Gastrocnemius medialis (tissue), 4 donors: ENCODE measurements at regions of chr16 and their contacts with region 1.

Region 1: DNA sequence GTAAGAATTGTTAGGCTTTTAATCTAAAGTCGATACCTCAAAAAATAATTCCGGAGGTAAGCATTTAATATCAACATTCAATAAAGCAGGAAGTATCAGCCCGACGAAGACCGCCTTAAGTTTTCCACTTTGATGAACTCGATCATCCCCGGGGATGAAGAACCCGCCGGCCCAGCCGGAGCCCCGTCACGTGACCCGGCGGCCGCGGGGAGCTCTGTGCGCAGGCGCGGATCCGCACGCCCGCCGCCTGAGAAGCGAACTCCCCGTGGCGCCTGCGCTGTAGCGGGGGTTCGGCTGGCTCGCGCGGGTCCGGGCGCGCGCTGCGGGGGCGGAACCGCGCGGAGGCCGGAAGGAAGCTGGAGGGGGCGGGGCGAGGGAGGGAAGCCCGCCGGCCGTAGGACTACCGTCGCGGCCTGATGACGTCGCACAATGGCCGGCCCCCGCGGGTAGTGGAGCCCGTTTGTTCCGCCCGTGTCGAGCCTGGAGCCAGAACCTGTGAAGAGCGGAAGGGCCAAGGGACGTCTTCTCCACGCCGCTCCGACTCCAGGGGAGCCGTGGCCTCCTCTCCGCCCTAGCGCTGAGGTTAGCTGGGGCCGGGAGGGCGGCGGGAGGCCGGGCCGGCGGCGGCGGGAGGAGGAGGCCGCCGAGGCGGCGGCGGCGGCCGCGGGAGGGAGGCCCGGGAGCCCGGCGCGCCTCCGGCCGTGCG is at the start of gene ZC3H18:
- DNase-seq: peak; percentile 92 to 94
- ATAC-seq: peak; percentile 94 to 96
- H3K4me3 ChIP-seq: peak within 1 kb of the TSS; percentile 78 to 93 (median 90)
- H3K27ac ChIP-seq: peak within 1 kb of the TSS; percentile 84 to 90 (median 88)
- H3K4me1 ChIP-seq: peaks cover 22 to 29% of the 10 kb centered on the region in 2 donors
- H3K27me3 ChIP-seq: no peaks in the 10 kb centered on the region
- CTCF ChIP-seq: peak in 3 of 5 experiments; percentile 0 to 37 (median 36)
- POLR2A ChIP-seq: peak; percentile 58 to 65
- total RNA-seq, gene ZC3H18: 10.9 to 20.5 (median 18.4) TPM

Region 2: GRCh38 chr16:87765776-87766484 is 804.2 kb before region 1 on chr16 and contains the start of gene KLHDC4:
- in situ Hi-C with region 1: loop called in 1 of 4 experiments (anchors 25 kb)
- intact Hi-C with region 1: loop called (anchors 1 kb)
- DNase-seq: peak; percentile 83 to 86
- ATAC-seq: peak; percentile 95
- H3K4me3 ChIP-seq: peak within 1 kb of the TSS; percentile 86 to 98 (median 94)
- H3K27ac ChIP-seq: peak within 1 kb of the TSS; percentile 88 to 95 (median 90)
- H3K4me1 ChIP-seq: peaks cover 5 to 8% of the 10 kb centered on the region in 2 donors
- H3K27me3 ChIP-seq: no peaks in the 10 kb centered on the region
- CTCF ChIP-seq: no peak
- POLR2A ChIP-seq: peak; percentile 68 to 85
- total RNA-seq, gene KLHDC4: 8.2 to 12.7 (median 10.4) TPM

Region 3: DNA sequence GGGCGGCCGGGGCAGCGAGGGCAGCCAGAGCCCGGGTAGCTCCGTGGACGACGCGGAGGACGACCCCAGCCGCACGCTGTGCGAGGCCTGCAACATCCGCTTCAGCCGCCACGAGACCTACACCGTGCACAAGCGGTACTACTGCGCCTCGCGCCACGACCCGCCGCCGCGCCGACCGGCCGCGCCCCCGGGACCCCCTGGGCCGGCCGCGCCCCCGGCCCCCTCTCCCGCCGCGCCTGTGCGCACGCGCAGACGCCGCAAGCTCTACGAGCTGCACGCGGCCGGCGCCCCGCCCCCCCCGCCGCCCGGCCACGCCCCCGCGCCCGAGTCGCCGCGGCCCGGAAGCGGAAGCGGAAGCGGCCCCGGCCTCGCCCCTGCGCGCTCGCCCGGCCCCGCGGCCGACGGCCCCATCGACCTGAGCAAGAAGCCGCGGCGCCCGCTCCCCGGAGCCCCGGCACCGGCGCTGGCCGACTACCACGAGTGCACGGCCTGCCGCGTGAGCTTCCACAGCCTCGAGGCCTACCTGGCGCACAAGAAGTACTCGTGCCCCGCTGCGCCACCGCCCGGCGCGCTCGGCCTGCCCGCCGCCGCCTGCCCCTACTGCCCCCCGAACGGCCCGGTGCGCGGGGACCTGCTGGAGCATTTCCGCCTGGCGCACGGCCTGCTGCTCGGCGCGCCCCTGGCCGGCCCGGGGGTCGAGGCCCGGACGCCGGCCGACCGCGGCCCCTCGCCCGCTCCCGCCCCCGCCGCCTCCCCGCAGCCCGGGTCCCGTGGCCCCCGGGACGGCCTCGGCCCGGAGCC is 36.0 kb before region 1 on chr16:
- in situ Hi-C with region 1: no loop called
- intact Hi-C with region 1: loop called (anchors 2 kb)
- DNase-seq: peak; percentile 42 to 67
- ATAC-seq: peak; percentile 90
- H3K4me3 ChIP-seq: peak overlapping the region; percentile 45 to 79 (median 66)
- H3K27ac ChIP-seq: peak overlapping the region; percentile 62 to 88 (median 84)
- H3K4me1 ChIP-seq: peaks cover 7 to 25% of the 10 kb centered on the region in 2 donors
- H3K27me3 ChIP-seq: peaks cover 0 to 3% (median 2%) of the 10 kb centered on the region in 3 donors
- CTCF ChIP-seq: peak in 1 of 5 experiments; percentile 19
- POLR2A ChIP-seq: peak; percentile 68 to 80

Region 4: DNA sequence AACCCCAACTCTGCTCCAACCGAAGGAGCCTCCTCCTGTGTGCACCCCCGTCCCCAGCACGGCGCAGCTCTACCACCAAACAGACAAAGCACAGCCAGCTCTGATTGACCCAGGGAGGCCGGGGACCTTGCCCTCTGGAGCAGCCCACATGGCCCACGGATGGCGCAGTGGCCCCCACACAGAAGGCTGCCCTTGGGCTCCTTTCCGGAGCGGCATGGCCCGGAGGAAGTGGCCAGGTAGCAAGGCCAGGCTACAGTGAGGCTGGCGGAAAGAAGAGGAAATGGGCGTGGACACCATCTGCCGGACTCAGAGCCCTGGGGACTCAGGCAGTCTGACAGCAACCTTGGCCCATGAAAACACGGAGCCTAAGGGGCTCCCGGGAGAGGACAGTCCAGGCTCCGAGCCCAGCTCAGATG is 19.9 kb before region 1 on chr16:
- in situ Hi-C with region 1: no loop called
- intact Hi-C with region 1: no loop called
- DNase-seq: no peak
- ATAC-seq: no peak
- H3K4me3 ChIP-seq: no peak overlapping the region
- H3K27ac ChIP-seq: no peak overlapping the region
- H3K4me1 ChIP-seq: no peaks in the 10 kb centered on the region
- H3K27me3 ChIP-seq: peaks cover 2 to 19% (median 11%) of the 10 kb centered on the region in 3 donors
- CTCF ChIP-seq: no peak
- POLR2A ChIP-seq: no peak

Region 5: GRCh38 chr16:88706288-88706964 is 136.3 kb after region 1 on chr16 and contains the starts of genes CTU2 and RNF166:
- in situ Hi-C with region 1: loop called in 1 of 4 experiments (anchors 10 kb)
- intact Hi-C with region 1: loop called (anchors 2 kb)
- DNase-seq: peak; percentile 80 to 86
- ATAC-seq: peak; percentile 91 to 92
- H3K4me3 ChIP-seq: peak within 1 kb of the TSS; percentile 68 to 99 (median 81)
- H3K27ac ChIP-seq: peak within 1 kb of the TSS; percentile 80 to 95 (median 88)
- H3K4me1 ChIP-seq: peaks cover 23 to 33% of the 10 kb centered on the region in 2 donors
- H3K27me3 ChIP-seq: no peaks in the 10 kb centered on the region
- CTCF ChIP-seq: peak in 2 of 5 experiments; percentile 43 to 68
- POLR2A ChIP-seq: peak; percentile 96 to 99
- total RNA-seq, gene CTU2: 11.1 to 17.7 (median 14.1) TPM
- total RNA-seq, gene RNF166: 22.9 to 32.5 (median 26.1) TPM

Region 6: DNA sequence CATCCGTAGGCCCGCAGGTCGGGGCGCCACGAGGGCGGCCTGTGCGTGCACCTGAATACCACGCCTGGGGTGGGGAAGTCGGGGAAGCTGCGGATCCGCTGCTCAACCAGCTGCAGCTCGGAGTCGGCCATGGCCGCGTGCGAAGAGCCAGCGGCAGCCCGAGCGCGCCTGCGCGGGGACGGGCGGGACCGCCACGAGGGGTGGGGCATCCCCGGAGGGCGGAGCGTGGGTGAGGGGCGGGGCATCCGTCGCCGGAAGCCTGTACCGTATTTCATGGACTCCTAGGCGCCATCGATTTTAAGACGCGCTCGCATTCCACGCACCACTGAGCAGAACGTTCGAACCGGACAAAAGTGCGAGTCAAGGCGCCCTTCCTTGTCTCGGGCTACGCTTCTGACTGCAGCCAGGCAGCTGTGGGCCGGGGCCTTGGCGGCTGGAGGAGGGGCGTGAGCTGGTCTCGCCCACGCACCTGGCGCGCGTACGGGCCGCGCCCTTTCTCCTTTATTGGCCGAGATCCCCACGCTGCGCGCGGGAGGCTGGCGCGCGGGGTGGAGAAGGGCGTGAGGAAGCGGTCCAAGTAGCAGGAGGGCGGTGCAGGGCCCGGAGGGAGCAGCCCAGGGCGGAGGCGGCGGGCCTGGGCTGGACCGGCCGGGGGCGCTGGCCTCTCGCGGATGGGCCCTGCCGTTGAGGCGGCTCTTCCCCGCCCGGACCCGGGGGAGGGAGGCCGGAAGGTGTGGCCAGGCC is 241.8 kb after region 1 on chr16 and contains the start of gene APRT:
- in situ Hi-C with region 1: no loop called
- intact Hi-C with region 1: no loop called
- DNase-seq: peak; percentile 89
- ATAC-seq: peak; percentile 90 to 92
- H3K4me3 ChIP-seq: peak within 1 kb of the TSS; percentile 70 to 81 (median 74)
- H3K27ac ChIP-seq: peak within 1 kb of the TSS; percentile 81 to 91 (median 90)
- H3K4me1 ChIP-seq: peaks cover 14 to 21% of the 10 kb centered on the region in 2 donors
- H3K27me3 ChIP-seq: no peaks in the 10 kb centered on the region
- CTCF ChIP-seq: peak in 3 of 5 experiments; percentile 16 to 45 (median 25)
- POLR2A ChIP-seq: peak; percentile 83 to 85
- total RNA-seq, gene APRT: 56.2 to 78.7 (median 62.4) TPM

Region 7: GRCh38 chr16:89972244-89973234 is 1402.4 kb after region 1 on chr16:
- in situ Hi-C with region 1: no loop called
- intact Hi-C with region 1: loop called (anchors 5 kb)
- DNase-seq: peak; percentile 79 to 86
- ATAC-seq: peak; percentile 96 to 98
- H3K4me3 ChIP-seq: peak overlapping the region; percentile 84 to 100 (median 94)
- H3K27ac ChIP-seq: peak overlapping the region; percentile 78 to 99 (median 98)
- H3K4me1 ChIP-seq: peaks cover 28 to 40% of the 10 kb centered on the region in 2 donors
- H3K27me3 ChIP-seq: no peaks in the 10 kb centered on the region
- CTCF ChIP-seq: peak in 2 of 5 experiments; percentile 29 to 33
- POLR2A ChIP-seq: peak; percentile 89 to 94